B cell (primary cell): ENCODE measurements at regions of chr3 and their contacts with region 1.

Region 1: GRCh38 chr3:50358911-50359759 is at the start of gene TMEM115:
- DNase-seq: peak; percentile 96
- ATAC-seq: peak; percentile 100
- H3K4me3 ChIP-seq: peak within 1 kb of the TSS; percentile 19 to 93 (median 85)
- H3K4me3 Mint-ChIP-seq: peak within 1 kb of the TSS; percentile 99
- H3K27ac ChIP-seq: peak within 1 kb of the TSS; percentile 60 to 81
- H3K27ac Mint-ChIP-seq: peak within 1 kb of the TSS; percentile 96
- H3K4me1 ChIP-seq: peaks cover 28 to 40% of the 10 kb centered on the region in 2 donors
- H3K4me1 Mint-ChIP-seq: peaks cover 50% of the 10 kb centered on the region
- H3K27me3 ChIP-seq: no peaks in the 10 kb centered on the region
- H3K27me3 Mint-ChIP-seq: no peaks in the 10 kb centered on the region
- CTCF ChIP-seq: no peak
- total RNA-seq, gene TMEM115: 26.2 and 27.2 TPM in 2 replicates

Region 2: GRCh38 chr3:50292159-50293078 is 66.7 kb before region 1 on chr3 and contains the start of gene IFRD2:
- CTCF ChIA-PET with region 1: interaction called, 3 read pairs
- POLR2A ChIA-PET with region 1: no interaction called
- intact Hi-C with region 1: loop called (anchors 1 kb)
- DNase-seq: peak; percentile 97
- ATAC-seq: peak; percentile 99
- H3K4me3 ChIP-seq: peak within 1 kb of the TSS; percentile 56 to 94 (median 81)
- H3K4me3 Mint-ChIP-seq: peak within 1 kb of the TSS; percentile 92
- H3K27ac ChIP-seq: peak within 1 kb of the TSS; percentile 57 to 85
- H3K27ac Mint-ChIP-seq: peak within 1 kb of the TSS; percentile 96
- H3K4me1 ChIP-seq: peaks cover 11 to 17% of the 10 kb centered on the region in 2 donors
- H3K4me1 Mint-ChIP-seq: peaks cover 17% of the 10 kb centered on the region
- H3K27me3 ChIP-seq: no peaks in the 10 kb centered on the region
- H3K27me3 Mint-ChIP-seq: no peaks in the 10 kb centered on the region
- CTCF ChIP-seq: no peak
- total RNA-seq, gene IFRD2: 55.8 and 63.4 TPM in 2 replicates

Region 3: DNA sequence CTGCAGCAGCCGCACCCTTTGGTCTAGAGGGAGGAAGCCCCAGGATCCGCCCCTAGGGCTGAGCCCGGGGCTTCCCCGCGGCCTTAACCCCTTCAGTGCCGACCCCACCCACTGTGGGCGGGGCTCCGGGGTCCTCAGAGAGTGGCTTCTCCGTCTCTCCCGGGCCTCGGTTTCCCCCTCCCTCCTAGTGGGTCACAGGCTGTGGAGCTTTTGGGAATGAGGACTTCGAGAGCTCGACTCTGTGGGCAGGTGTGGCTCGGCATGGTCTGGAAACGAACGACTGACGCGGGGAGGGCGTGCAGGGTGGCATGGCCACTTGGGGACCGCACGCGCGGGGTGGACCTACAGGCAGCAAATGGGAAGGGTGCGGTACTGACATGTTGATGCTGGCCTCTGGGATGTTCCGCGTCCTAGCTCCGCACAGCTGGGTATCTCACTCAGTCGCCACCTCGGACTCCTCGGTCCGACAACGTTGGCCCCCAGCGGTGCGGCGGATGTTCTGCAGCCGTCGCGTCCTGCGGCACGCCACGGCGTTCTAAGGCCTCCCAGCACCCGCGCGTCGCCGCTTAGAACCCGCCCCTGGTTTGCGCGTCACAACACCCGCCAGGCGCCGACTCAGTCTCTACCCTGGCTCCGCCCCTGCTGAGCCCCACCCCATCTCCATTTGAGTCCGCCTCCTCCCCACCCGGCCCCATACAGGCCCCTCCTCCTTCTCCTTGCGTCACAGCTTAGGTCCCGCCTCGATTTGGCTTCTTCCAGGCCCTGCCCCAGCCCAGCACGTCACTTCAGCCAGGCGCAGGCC is 60.1 kb before region 1 on chr3 and contains the starts of genes HYAL3 and NAA80:
- CTCF ChIA-PET with region 1: interaction called, 3 read pairs
- POLR2A ChIA-PET with region 1: no interaction called
- intact Hi-C with region 1: loop called (anchors 1 kb)
- DNase-seq: peak; percentile 100
- ATAC-seq: peak; percentile 91
- H3K4me3 ChIP-seq: peak within 1 kb of the TSS; percentile 68 to 89 (median 88)
- H3K4me3 Mint-ChIP-seq: peak within 1 kb of the TSS; percentile 100
- H3K27ac ChIP-seq: peak within 1 kb of the TSS; percentile 77 to 84
- H3K27ac Mint-ChIP-seq: peak within 1 kb of the TSS; percentile 100
- H3K4me1 ChIP-seq: peaks cover 18 to 24% of the 10 kb centered on the region in 2 donors
- H3K4me1 Mint-ChIP-seq: peaks cover 33% of the 10 kb centered on the region
- H3K27me3 ChIP-seq: no peaks in the 10 kb centered on the region
- H3K27me3 Mint-ChIP-seq: no peaks in the 10 kb centered on the region
- CTCF ChIP-seq: peak; percentile 65
- total RNA-seq, gene HYAL3: 1.9 and 3.7 TPM in 2 replicates
- total RNA-seq, gene NAA80: 33.8 and 37.8 TPM in 2 replicates

Region 4: DNA sequence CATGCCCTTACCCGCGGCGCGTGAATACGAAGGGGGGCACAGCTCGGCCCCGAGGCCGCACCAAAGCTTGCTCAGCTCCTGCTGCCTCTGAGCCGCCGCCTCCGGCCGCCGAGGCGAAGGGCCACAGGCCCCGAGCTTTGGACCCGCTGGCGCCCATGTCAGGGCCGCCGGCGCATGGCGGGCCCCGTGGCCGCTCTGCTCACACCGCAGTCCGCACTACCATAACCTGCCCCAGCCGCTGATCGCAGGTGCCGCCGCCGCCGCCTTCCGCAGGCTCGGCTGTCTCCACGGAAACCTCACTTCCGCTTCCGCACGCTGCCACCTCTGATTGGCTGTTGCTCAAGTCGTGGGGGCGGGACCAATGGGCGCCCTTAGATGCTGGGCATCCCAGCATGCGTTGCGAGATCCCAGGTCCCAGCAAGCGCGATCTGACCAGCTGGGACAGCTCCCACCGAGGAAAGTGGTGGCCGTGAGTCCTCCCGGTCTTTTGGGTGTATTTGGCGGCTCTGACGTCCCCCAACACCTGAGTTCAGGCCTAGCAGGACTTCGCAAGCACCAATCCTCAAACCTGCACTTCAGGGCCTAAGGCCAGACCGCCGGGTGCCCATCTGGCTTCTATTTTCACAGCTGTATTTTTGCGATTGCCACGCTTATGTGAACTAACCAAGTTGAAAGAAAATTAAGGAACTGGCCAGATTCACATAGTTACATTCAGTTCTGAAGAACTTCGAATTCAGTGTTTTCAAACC is 31.0 kb before region 1 on chr3 and contains the start of gene TUSC2:
- CTCF ChIA-PET with region 1: no interaction called
- POLR2A ChIA-PET with region 1: no interaction called
- intact Hi-C with region 1: loop called (anchors 1 kb)
- DNase-seq: peak; percentile 97
- ATAC-seq: peak; percentile 94
- H3K4me3 ChIP-seq: peak within 1 kb of the TSS; percentile 39 to 98 (median 87)
- H3K4me3 Mint-ChIP-seq: peak within 1 kb of the TSS; percentile 95
- H3K27ac ChIP-seq: peak within 1 kb of the TSS; percentile 66 to 90
- H3K27ac Mint-ChIP-seq: peak within 1 kb of the TSS; percentile 91
- H3K4me1 ChIP-seq: peaks cover 14 to 24% of the 10 kb centered on the region in 2 donors
- H3K4me1 Mint-ChIP-seq: peaks cover 25% of the 10 kb centered on the region
- H3K27me3 ChIP-seq: no peaks in the 10 kb centered on the region
- H3K27me3 Mint-ChIP-seq: no peaks in the 10 kb centered on the region
- CTCF ChIP-seq: no peak
- total RNA-seq, gene TUSC2: 25.5 and 28.2 TPM in 2 replicates

Region 5: DNA sequence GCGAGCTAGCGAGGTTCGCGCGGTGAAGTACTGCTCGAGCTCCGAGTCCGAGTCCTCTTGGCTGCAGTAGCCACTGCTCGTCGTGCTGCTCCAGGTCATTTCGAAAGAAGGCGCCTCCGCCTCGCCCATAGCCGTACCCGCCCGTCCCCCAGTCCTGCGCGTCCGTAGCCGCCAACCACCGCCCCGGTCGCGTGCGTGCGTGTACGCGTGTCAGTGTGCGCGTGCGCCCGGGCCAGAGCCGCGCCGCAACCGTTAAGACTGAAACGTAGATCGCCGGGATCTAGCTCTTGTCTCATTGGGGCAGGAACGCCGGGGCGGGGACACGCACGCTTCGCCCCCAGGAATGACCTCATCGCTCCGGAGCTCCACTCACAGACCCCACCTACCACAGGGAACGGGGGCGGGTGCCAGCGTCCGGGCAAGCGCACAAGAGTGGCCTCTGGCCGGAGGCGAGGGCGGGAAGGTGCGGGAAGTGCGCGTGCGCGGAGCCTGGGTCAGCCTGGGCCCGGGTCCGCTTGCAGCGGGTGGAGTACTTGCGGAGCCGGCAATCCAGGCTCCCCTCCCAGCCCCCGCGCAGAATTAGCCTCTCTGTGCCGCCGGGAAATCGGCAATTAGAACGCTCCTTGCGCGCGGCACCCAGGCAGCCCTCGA is 21.8 kb before region 1 on chr3:
- CTCF ChIA-PET with region 1: interaction called, 10 read pairs
- POLR2A ChIA-PET with region 1: interaction called, 96 read pairs
- intact Hi-C with region 1: loop called (anchors 2 kb)
- DNase-seq: peak; percentile 97
- ATAC-seq: peak; percentile 84
- H3K4me3 ChIP-seq: peak overlapping the region; percentile 39 to 86 (median 68)
- H3K4me3 Mint-ChIP-seq: peak overlapping the region; percentile 96
- H3K27ac ChIP-seq: peak overlapping the region; percentile 97 to 98
- H3K27ac Mint-ChIP-seq: peak overlapping the region; percentile 99
- H3K4me1 ChIP-seq: peaks cover 37 to 74% of the 10 kb centered on the region in 2 donors
- H3K4me1 Mint-ChIP-seq: peaks cover 55% of the 10 kb centered on the region
- H3K27me3 ChIP-seq: no peaks in the 10 kb centered on the region
- H3K27me3 Mint-ChIP-seq: no peaks in the 10 kb centered on the region
- CTCF ChIP-seq: no peak

Region 6: DNA sequence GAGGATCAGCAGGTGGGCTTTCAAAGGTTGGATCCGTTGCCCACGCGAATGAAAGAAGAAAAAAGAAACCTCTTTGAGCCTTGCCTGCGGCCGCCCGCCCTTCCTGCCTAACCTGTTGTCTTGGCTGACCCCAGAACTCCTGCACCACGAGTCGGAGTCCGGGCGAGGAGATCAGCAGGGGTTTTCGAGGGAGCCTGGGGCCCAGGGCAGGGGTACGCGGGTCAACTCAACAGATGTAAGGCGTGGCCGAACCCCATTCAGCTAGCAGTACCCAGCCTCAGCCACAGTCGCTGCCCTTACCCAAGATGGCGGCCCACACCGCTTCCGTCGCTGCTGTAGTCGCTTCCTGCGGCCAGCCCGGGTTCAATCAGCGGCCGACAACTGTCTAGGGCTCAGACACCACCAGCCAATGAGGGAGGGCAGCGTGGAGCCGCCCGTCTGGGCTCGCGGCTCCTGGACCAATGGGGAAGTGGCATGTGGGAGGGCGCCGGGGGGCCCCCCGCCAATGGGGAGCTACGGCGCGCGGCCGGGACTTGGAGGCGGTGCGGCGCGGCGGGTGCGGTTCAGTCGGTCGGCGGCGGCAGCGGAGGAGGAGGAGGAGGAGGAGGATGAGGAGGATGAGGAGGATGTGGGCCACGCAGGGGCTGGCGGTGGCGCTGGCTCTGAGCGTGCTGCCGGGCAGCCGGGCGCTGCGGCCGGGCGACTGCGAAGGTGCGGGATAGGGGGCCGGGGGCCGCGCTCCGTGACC is 1025.8 kb after region 1 on chr3 and contains the start of gene MANF:
- CTCF ChIA-PET with region 1: no interaction called
- POLR2A ChIA-PET with region 1: no interaction called
- intact Hi-C with region 1: loop called (anchors 2 kb)
- DNase-seq: peak; percentile 98
- ATAC-seq: peak; percentile 95
- H3K4me3 ChIP-seq: peak within 1 kb of the TSS; percentile 74 to 97 (median 87)
- H3K4me3 Mint-ChIP-seq: peak within 1 kb of the TSS; percentile 99
- H3K27ac ChIP-seq: peak within 1 kb of the TSS; percentile 82 to 95
- H3K27ac Mint-ChIP-seq: peak within 1 kb of the TSS; percentile 99
- H3K4me1 ChIP-seq: peaks cover 21 to 33% of the 10 kb centered on the region in 2 donors
- H3K4me1 Mint-ChIP-seq: peaks cover 42% of the 10 kb centered on the region
- H3K27me3 ChIP-seq: no peaks in the 10 kb centered on the region
- H3K27me3 Mint-ChIP-seq: no peaks in the 10 kb centered on the region
- CTCF ChIP-seq: no peak
- total RNA-seq, gene MANF: 28.4 and 29.7 TPM in 2 replicates